Posterior cingulate gyrus (tissue), 11 donors: ENCODE measurements at regions of chr4 and their contacts with region 1.

Region 1: DNA sequence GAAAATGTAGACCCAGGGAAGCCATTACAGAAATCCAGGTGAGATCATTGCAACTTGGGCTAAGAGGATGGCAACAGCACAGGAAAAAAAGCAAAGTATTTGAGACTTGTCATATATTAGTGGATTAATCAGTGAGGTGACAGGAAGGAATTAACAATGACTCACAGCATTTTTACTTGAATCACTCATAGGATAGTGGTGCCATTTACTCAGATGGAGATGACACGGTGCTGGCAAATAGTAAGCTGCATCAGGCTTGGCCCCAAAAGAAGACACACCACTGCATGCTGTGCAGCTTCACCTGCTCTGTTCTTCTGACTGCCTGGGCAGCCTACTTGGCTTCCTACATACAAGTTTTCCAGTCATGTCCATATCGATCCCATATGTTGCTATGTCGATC is 144.8 kb downstream of the FRYL start:
- DNase-seq: peak in 1 of 10 donors; percentile 18

Region 2: GRCh38 chr4:48340965-48341775 is 294.1 kb before region 1 on chr4 and contains the start of gene SLAIN2:
- intact Hi-C with region 1: loop called (anchors 10 kb)
- DNase-seq: peak; percentile 96 to 100 (median 98)

Region 3: GRCh38 chr4:48588230-48589097 is 46.8 kb before region 1 on chr4:
- intact Hi-C with region 1: loop called (anchors 10 kb)
- DNase-seq: no peak

Region 4: DNA sequence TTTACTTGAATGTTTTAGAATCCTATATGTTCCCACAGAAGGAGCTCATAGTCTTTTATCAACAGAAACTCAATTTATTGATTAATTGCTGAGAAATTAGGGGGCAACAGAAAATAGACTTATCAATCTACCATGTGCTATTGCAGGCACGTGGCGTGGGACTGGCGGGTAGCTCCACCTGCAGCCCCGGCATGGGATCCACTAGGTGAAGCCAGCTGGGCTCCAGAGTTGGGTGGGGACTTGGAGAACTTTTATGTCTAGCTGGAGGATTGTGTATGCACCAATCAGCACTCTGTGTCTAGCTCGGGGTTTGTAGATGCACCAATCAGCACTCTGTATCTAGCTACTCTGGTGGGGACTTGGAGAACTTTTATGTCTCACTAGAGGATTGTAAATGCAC is 192.3 kb after region 1 on chr4:
- intact Hi-C with region 1: no loop called
- DNase-seq: no peak